ENCODE measurements at regions of chr11 and their contacts with region 1.

Region 1: DNA sequence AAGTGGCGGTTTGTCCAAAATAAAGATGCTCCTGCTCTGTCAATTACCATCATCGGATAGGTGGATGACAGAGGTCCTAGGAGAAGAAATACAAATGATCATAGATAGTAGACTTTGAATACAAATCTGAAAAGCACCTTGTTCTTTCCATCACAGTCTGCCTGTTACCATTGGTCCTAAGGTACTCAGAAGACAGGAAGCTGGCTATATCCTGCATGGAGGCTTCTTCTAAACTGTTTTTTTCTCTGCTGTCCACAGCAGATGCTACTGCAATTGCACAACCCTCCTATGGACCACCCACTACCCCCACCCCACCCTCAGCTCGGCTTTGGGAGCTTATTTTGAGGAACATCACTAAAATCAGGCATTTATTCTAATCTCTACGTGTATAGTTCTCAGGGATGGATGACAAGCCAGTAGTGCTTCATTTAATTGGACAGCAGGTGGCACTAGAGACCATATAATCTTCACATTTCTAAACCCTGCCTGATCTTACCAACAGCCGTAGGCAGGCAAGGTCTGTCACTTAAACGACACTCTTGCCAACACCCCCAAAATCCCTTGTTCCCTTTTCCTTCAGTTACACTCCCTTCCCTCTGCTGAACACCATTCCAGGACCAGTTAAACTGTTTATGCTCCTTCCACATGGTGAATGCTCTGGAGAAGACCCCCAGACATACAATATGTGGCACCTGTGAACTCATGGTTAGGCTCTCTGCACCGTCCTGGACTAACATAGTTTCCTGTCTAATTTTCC is 6.6 kb upstream of the PTS start:
- DNase-seq: no peak

Region 2: GRCh38 chr11:112174789-112175598 is 44.7 kb before region 1 on chr11 and contains the start of gene BCO2:
- intact Hi-C with region 1: no loop called
- DNase-seq: peak; percentile 82
- total RNA-seq, gene BCO2: 67.8 TPM

Region 3: GRCh38 chr11:112280268-112281126 is 60.8 kb after region 1 on chr11:
- intact Hi-C with region 1: loop called (anchors 1 kb)
- DNase-seq: no peak

Measured in cardiac septum (tissue), 1 donor.